CD14-positive monocyte (primary cell): ENCODE measurements at regions of chr2 and their contacts with region 1.

Region 1: GRCh38 chr2:9739531-9739964 is 103.7 kb upstream of the TAF1B start:
- DNase-seq: peak in 2 of 3 donors; percentile 31 to 39
- H3K4me3 ChIP-seq: peak overlapping the region in 2 of 3 experiments; percentile 31 to 58
- H3K4me3 Mint-ChIP-seq: peak overlapping the region; percentile 81 to 83
- H3K27ac ChIP-seq: peak overlapping the region in 1 of 2 donors; percentile 49
- H3K27ac Mint-ChIP-seq: peak overlapping the region in 6 of 7 donors; percentile 56 to 89 (median 76)
- H3K4me1 ChIP-seq: peaks cover 12% of the 10 kb centered on the region in 2 donors
- H3K4me1 Mint-ChIP-seq: peaks cover 25% of the 10 kb centered on the region
- H3K27me3 ChIP-seq: no peaks in the 10 kb centered on the region
- H3K27me3 Mint-ChIP-seq: peaks cover 5 to 16% (median 5%) of the 10 kb centered on the region in 3 donors
- CTCF ChIP-seq: no peak

Region 2: DNA sequence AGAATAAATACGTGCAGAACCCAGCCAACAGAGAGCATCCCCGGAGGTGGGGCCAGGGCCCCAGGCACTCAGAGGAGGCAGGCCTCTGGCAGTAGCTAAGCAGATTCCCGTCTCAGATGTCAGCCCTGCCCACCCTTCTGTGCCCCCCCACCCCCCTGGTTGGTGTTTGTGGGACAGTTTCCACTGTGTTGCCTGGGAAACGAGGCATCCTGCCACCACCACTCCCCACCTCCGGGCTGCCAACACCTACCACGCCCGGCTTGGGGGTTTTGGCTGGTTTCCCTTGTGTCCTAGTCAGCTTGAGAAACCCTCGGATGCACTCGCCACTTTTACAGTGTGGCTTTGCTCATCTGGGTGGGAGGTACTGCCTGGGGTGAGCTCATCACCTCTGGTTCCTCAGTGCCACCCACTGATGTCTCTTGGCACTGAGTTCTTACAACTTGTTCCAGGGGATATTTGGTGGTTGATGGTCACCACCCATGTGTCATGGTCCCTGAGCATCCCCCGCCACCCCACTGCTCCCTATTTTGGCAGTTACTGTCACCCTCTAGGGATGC is 36.4 kb before region 1 on chr2:
- intact Hi-C with region 1: no loop called
- DNase-seq: peak; percentile 52 to 66 (median 61)
- H3K4me3 ChIP-seq: no peak overlapping the region
- H3K4me3 Mint-ChIP-seq: no peak overlapping the region
- H3K27ac ChIP-seq: peak overlapping the region; percentile 19 to 68
- H3K27ac Mint-ChIP-seq: peak overlapping the region; percentile 43 to 89 (median 68)
- H3K4me1 ChIP-seq: peaks cover 22 to 37% of the 10 kb centered on the region in 2 donors
- H3K4me1 Mint-ChIP-seq: peaks cover 28% of the 10 kb centered on the region
- H3K27me3 ChIP-seq: no peaks in the 10 kb centered on the region
- H3K27me3 Mint-ChIP-seq: peaks cover 1 to 4% (median 3%) of the 10 kb centered on the region in 3 donors
- CTCF ChIP-seq: no peak

Region 3: GRCh38 chr2:9799665-9800632 is 60.4 kb after region 1 on chr2:
- intact Hi-C with region 1: loop called in 1 of 2 experiments (anchors 5 kb)
- DNase-seq: peak; percentile 84 to 86 (median 85)
- H3K4me3 ChIP-seq: peak overlapping the region; percentile 28 to 75 (median 40)
- H3K4me3 Mint-ChIP-seq: peak overlapping the region; percentile 79 to 99
- H3K27ac ChIP-seq: peak overlapping the region; percentile 71 to 87
- H3K27ac Mint-ChIP-seq: peak overlapping the region; percentile 93 to 98 (median 95)
- H3K4me1 ChIP-seq: peaks cover 55 to 62% of the 10 kb centered on the region in 2 donors
- H3K4me1 Mint-ChIP-seq: peaks cover 61% of the 10 kb centered on the region
- H3K27me3 ChIP-seq: no peaks in the 10 kb centered on the region
- H3K27me3 Mint-ChIP-seq: peaks cover 2% of the 10 kb centered on the region in 3 donors
- CTCF ChIP-seq: peak; percentile 96